ENCODE measurements at regions of chr9 and their contacts with region 1.

Region 1: DNA sequence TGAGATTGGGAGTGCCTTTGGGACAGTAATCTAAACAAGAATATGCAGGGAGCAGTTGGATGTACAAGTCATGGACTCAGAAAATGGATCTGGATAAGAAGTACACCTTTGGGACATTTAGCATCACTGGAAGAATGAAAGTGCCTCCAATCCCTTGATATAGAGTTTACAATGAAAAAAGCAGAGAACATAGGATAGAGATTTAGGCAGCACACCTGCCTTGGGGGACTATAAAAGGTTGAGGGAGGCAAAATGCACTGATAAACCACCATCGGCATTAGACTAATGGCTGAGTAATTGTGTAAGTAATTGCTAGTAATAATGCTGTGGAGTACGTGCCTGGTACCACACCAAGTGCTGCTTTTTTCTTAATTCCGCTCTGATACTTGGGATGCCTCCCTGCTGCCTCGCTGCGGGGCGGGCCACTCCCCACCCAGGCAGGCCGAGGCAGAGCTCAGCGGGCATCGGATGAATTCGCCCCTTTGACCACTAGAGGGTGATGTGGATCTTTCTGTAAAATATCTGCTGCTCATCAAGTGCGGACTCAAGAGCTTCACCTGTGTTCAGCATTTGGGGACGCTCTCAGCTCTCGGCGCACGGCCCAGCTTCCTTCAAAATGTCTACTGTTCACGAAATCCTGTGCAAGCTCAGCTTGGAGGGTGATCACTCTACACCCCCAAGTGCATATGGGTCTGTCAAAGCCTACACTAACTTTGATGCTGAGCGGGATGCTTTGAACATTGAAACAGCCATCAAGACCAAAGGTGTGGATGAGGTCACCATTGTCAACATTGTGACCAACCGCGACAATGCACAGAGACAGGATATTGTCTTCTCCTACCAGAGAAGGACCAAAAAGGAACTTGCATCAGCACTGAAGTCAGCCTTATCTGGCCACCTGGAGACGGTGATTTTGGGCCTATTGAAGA is 99.9 kb downstream of the ANKRD18B start:
- DNase-seq: peak; percentile 81
- ATAC-seq: peak; percentile 98
- H3K4me3 ChIP-seq: no peak overlapping the region
- H3K27ac ChIP-seq: no peak overlapping the region
- H3K4me1 ChIP-seq: peaks cover 3 to 25% of the 10 kb centered on the region in 2 experiments; a peak in 3 of 4 replicates
- H3K27me3 ChIP-seq: no peaks in the 10 kb centered on the region
- CTCF ChIP-seq: peak; percentile 77 to 98 (median 79)
- POLR2A ChIP-seq: no peak
- RAD21 ChIP-seq: peak; percentile 94

Region 2: GRCh38 chr9:33404788-33405362 is 219.0 kb before region 1 on chr9:
- CTCF ChIA-PET with region 1: interaction called, 4 read pairs
- POLR2A ChIA-PET with region 1: no interaction called
- RAD21 ChIA-PET with region 1: no interaction called
- intact Hi-C with region 1: loop called (anchors 1 kb)
- DNase-seq: no peak
- ATAC-seq: 0 out of 2 replicates have a peak, but pooled peaks have one; percentile 14
- H3K4me3 ChIP-seq: no peak overlapping the region
- H3K27ac ChIP-seq: no peak overlapping the region
- H3K4me1 ChIP-seq: peaks cover 0 to 3% of the 10 kb centered on the region in 2 experiments; a peak in 1 of 4 replicates
- H3K27me3 ChIP-seq: no peaks in the 10 kb centered on the region
- CTCF ChIP-seq: no peak
- POLR2A ChIP-seq: no peak
- RAD21 ChIP-seq: no peak

Region 3: GRCh38 chr9:33535541-33535940 is 88.4 kb before region 1 on chr9:
- CTCF ChIA-PET with region 1: no interaction called
- POLR2A ChIA-PET with region 1: no interaction called
- RAD21 ChIA-PET with region 1: no interaction called
- intact Hi-C with region 1: no loop called
- DNase-seq: no peak
- ATAC-seq: no peak
- H3K4me3 ChIP-seq: no peak overlapping the region
- H3K27ac ChIP-seq: no peak overlapping the region
- H3K4me1 ChIP-seq: peaks cover 0 to 4% of the 10 kb centered on the region in 2 experiments; a peak in 2 of 4 replicates
- H3K27me3 ChIP-seq: no peaks in the 10 kb centered on the region
- CTCF ChIP-seq: no peak
- POLR2A ChIP-seq: no peak
- RAD21 ChIP-seq: no peak

Region 4: DNA sequence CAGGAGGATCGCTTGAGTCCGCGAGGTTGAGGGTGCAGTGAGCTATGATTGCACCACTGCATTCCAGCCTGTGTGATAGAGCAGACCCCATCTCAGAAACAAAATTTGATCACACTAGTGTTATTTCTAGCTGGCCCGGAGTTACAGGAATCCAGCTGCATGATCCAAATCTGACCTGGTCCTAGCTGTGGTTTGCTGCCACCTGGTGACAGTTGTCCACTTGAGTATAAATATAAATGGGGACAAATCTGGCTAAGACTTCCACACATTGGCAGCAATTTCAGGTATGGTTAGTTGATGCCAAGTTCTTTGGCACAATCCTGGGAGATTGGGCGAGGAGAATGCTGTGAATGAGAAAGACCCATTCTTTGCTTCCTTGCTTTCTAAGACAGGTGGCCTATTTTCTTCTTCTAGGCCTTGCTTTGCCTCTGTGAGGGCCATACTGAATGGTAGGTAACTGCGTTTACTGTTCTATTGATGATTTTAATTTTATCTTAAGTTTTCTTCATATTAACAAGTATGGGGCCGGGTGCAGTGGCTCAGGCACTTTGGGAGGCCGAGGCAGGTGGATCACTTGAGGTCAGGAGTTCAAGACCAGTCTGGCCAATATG is 228.4 kb after region 1 on chr9:
- CTCF ChIA-PET with region 1: interaction called, 3 read pairs
- POLR2A ChIA-PET with region 1: no interaction called
- RAD21 ChIA-PET with region 1: no interaction called
- intact Hi-C with region 1: loop called (anchors 10 kb)
- DNase-seq: peak; percentile 43
- ATAC-seq: peak; percentile 88
- H3K4me3 ChIP-seq: no peak overlapping the region
- H3K27ac ChIP-seq: no peak overlapping the region
- H3K4me1 ChIP-seq: peaks cover 1 to 23% of the 10 kb centered on the region in 2 experiments; a peak in 3 of 4 replicates
- H3K27me3 ChIP-seq: no peaks in the 10 kb centered on the region
- CTCF ChIP-seq: peak; percentile 62 to 81 (median 71)
- POLR2A ChIP-seq: no peak
- RAD21 ChIP-seq: peak; percentile 82

Measured in HCT116 (cell line).